ENCODE measurements at regions of chr3 and their contacts with region 1.

Region 1: GRCh38 chr3:170357176-170357919 is at the start of gene SKIL:
- DNase-seq: peak; percentile 93
- H3K4me3 Mint-ChIP-seq: peak within 1 kb of the TSS; percentile 91
- H3K27ac Mint-ChIP-seq: peak within 1 kb of the TSS; percentile 98
- H3K4me1 Mint-ChIP-seq: peaks cover 47% of the 10 kb centered on the region
- H3K27me3 Mint-ChIP-seq: peaks cover 9% of the 10 kb centered on the region
- total RNA-seq, gene SKIL: 27.5 and 29.4 TPM in 2 replicates

Region 2: GRCh38 chr3:169812332-169813235 is 544.8 kb before region 1 on chr3 and contains the starts of genes LRRC34 and LRRIQ4:
- intact Hi-C with region 1: loop called (anchors 1 kb)
- DNase-seq: peak; percentile 64
- H3K4me3 Mint-ChIP-seq: peak within 1 kb of the TSS; percentile 83
- H3K27ac Mint-ChIP-seq: peak within 1 kb of the TSS; percentile 89
- H3K4me1 Mint-ChIP-seq: peaks cover 49% of the 10 kb centered on the region
- H3K27me3 Mint-ChIP-seq: peaks cover 6% of the 10 kb centered on the region
- total RNA-seq, gene LRRC34: 2.8 and 2.9 TPM in 2 replicates
- total RNA-seq, gene LRRIQ4: 0.10 and 0.12 TPM in 2 replicates

Region 3: DNA sequence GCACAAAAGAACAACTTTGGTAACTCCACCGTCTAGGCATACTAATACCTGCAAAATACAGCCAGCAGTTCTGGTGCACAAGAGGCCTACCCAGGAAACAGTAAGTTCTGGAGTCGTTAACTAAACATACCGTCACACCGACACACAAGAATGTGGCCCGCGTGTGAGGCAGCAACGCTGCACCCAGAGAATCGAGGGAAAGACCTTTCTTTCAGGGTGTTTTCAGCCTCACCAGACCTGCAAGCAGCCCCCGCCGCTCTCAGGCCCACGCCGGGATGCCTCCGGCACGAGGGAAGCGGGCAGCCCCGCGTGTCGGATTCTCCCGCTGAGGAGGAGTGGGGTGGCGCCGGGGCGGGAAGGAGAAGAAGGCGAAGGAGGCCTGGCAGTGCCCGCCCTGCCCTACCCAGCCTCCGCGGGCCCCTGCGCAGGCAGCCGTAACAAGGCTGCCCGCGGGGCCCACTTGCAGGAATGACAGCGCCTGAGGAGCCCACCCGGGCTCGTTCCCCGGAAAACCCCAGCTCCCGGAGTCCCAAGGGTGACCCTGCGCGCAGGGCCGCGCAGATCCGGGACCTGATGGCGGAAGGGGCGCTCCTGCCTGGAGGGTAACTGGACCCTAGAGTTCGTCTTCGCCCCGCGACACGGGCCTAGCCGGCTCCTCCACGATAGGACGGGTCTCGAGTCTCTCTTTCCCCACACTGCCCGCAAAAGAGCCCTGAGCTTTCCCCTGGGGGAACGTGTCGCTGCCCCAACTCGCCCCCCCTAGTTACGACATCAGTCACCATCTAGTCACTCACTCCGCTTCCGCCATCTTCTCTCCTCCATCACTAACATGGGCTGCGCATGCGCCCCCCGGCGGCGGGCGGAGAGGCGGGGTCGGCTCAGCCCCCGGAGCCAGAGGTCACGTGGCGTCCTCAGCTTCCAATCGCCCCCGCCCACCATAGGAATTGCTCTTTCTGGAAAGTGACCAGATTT is 176.2 kb before region 1 on chr3 and contains the start of gene PHC3:
- intact Hi-C with region 1: loop called (anchors 1 kb)
- DNase-seq: peak; percentile 88
- H3K4me3 Mint-ChIP-seq: peak within 1 kb of the TSS; percentile 98
- H3K27ac Mint-ChIP-seq: peak within 1 kb of the TSS; percentile 100
- H3K4me1 Mint-ChIP-seq: peaks cover 33% of the 10 kb centered on the region
- H3K27me3 Mint-ChIP-seq: no peaks in the 10 kb centered on the region
- total RNA-seq, gene PHC3: 57.7 and 58.7 TPM in 2 replicates

Region 4: DNA sequence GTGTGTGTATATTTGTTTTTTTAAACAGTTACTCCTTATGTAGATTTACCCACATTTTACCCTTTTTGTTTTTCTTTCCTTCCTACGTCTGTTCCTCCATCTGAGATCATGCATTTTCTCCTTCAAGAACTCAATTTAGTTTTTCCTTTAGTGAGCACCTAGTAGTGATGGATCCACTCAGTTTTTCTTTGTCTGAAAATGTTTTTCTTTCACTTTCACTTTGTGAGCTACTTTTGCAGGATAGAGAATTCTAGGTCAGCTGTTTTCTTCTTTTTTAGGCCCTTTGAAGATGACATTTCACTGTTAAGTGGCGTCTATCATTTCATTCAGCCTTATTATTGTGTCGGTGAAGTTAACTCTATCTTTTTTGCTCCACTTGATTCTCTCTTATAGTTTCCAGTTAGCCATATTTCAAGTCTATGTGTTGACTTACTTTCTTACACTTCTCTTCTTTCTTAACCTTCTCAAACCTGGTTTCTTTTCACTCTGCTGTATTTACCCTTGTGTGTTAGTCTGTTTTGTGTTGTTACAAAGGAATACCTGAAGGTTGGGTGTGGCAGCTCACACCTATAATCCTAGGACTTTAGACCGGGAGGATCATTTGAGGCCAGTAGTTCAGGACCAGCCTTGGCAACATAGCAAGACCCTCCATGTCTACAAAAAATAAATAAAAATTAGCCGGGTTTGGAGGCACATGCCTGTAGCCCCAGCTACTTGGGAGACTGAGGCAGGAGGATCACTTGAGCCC is 79.3 kb before region 1 on chr3:
- intact Hi-C with region 1: loop called (anchors 5 kb)
- DNase-seq: no peak
- H3K4me3 Mint-ChIP-seq: peak overlapping the region; percentile 83
- H3K27ac Mint-ChIP-seq: peak overlapping the region; percentile 86
- H3K4me1 Mint-ChIP-seq: peaks cover 30% of the 10 kb centered on the region
- H3K27me3 Mint-ChIP-seq: no peaks in the 10 kb centered on the region

Region 5: GRCh38 chr3:170869645-170870593 is 512.6 kb after region 1 on chr3 and contains the start of gene RPL22L1:
- intact Hi-C with region 1: loop called (anchors 1 kb)
- DNase-seq: peak; percentile 90
- H3K4me3 Mint-ChIP-seq: peak within 1 kb of the TSS; percentile 98
- H3K27ac Mint-ChIP-seq: peak within 1 kb of the TSS; percentile 100
- H3K4me1 Mint-ChIP-seq: peaks cover 24% of the 10 kb centered on the region
- H3K27me3 Mint-ChIP-seq: peaks cover 4% of the 10 kb centered on the region
- total RNA-seq, gene RPL22L1: 123 and 145 TPM in 2 replicates

Measured in activated T-helper 1 cell treated with anti-CD3 and anti-CD28 coated beads, Interleukin-12 subunit alpha, Interleukin-12 subunit beta, Interleukin-2, Interleukin-4 antibody, amounts not matched to agents 30 ng/mL and 10 ng/mL and 1 ng/mL, durations not matched to agents 14 hours and 24 hours and 36 hours (primary cell).